ENCODE measurements at regions of chr3 and their contacts with region 1.

Region 1: DNA sequence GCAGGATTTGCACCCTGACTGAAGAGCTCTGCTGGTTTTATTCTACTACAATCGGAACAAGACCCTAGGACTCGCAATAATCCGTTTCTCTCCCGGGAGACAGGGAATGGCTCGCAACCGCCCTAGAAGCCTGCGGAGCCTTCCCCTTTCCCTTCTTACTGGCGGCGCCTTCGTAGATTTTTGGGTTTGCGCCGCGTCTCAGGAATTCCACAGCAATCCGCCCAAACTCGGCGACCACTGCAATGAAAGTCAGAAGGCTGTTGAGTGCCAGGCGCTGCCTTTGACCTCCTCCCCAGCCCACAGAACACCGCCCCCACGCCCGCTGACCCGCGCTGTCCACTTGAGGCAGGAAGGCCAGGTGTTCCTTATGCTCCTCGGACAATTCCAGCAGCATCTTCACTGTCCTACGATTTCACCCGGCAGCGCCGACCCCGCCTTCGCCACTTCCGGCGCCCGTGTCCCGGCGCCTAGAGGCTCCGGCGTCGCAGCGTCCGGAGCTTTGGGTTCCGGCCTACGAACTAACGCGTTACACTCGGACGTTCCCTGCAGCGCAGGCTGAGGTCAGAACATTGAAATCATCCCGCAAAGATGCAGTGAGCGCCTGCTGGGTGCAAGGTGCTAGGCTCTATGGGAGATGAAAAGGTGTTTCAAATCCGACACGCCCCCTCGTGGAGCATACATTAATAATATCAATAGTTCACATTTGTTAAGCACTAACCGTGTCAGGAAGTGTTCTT is at the start of gene COMMD2:
- DNase-seq: peak; percentile 73
- H3K27ac ChIP-seq: peak within 1 kb of the TSS; percentile 74
- CTCF ChIP-seq: no peak; the same call in 1 of the 2 replicates

Region 2: DNA sequence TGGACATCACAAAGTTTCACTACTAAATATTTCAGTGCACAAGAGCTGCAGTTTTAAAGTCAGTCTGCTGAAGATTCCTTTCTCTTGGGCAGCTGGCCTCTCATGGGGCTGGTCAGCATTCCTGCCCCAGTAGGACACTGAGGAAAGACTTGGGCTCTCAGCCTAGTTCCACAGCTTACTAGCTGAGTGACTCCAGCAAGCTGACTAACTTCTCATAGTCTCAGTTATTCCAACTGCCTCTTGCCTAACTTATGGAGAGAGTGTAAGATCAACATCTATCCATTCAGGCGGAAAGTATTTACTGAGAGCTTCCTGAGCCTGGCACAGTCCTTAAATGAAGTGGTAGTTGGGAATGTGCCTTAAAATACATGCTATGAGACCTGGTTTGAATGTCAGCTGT is 250.7 kb before region 1 on chr3:
- CTCF ChIA-PET with region 1: no interaction called
- POLR2A ChIA-PET with region 1: no interaction called
- DNase-seq: no peak
- H3K27ac ChIP-seq: no peak overlapping the region
- CTCF ChIP-seq: no peak

Region 3: GRCh38 chr3:149736175-149736952 is 15.9 kb before region 1 on chr3:
- CTCF ChIA-PET with region 1: interaction called, 14 read pairs
- POLR2A ChIA-PET with region 1: no interaction called
- DNase-seq: peak; percentile 42
- H3K27ac ChIP-seq: no peak overlapping the region
- CTCF ChIP-seq: no peak

Region 4: DNA sequence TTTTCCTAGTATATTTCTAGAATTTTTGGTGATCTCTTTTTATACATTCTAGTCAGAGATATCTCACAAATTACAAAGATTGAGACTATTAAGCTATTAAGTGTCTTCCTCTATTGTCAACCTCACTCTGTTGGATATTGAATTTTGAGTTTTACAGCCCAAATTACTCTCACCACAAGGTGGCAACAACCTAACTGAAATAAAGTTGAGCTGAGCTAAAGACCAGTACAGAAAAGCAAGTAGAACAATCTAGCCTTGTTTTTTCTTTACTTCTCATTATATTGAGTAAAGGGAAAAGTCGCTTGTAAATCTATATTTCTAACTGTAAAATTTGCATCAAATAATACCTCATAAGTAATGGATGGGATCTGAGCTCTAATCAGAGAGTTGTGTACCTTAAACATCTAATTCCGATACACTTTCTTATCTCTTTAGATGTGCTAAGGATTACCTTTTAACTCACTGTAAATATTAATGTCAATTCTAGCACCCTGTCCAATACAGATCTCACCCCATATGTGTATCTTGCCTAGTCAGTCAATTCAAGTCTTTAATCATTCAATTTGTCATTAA is 13.6 kb after region 1 on chr3:
- CTCF ChIA-PET with region 1: interaction called, 10 read pairs
- POLR2A ChIA-PET with region 1: no interaction called
- DNase-seq: peak; percentile 9
- H3K27ac ChIP-seq: no peak overlapping the region
- CTCF ChIP-seq: peak; percentile 66

Region 5: DNA sequence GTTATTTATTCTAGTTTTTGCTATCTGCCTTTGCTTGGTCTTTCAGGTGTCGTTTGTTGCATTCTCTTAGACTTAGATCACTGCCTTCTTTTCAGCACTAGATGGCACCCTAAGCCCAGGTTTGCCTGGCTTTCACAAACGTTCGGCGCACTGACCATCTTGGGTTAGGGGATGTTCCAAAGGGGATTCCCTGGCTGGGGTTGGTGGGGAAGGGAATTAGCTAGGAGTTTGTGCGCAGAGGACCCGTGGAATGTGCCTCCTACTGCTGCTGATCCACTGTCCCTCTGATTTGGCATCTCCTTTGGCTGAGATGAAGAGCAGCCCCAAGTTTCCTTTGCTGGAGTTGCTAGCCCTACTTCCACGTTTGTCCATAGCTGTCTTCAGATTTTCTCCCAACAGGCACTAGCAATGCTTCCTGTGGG is 184.6 kb after region 1 on chr3:
- CTCF ChIA-PET with region 1: no interaction called
- POLR2A ChIA-PET with region 1: no interaction called
- DNase-seq: peak; percentile 44
- H3K27ac ChIP-seq: no peak overlapping the region
- CTCF ChIP-seq: peak; percentile 78

Region 6: GRCh38 chr3:150170852-150171520 is 418.8 kb after region 1 on chr3:
- CTCF ChIA-PET with region 1: no interaction called
- POLR2A ChIA-PET with region 1: no interaction called
- DNase-seq: no peak
- H3K27ac ChIP-seq: no peak overlapping the region
- CTCF ChIP-seq: no peak